Right ventricle myocardium inferior (tissue), 1 donor: ENCODE measurements at regions of chr6 and their contacts with region 1.

Region 1: DNA sequence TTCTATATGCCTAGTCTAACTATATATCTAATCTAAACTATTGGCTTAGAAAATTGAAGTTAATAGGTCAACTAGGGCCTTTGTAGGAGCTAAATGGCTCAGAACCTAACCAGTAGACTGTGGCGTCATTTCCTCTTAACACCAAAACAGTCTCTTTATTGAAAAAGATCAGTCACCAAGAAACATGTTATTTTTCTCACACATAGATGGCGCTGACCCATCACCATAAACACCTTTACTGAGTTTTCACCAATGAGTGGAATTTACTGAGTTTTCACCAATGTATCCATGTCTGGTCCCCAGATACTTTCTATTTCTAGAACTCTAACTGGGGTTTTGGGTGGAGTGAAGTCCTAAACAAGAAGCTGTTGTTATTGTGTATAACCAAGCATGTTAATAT is 636.0 kb downstream of the BCKDHB start:
- DNase-seq: no peak
- ATAC-seq: peak; percentile 34

Region 2: DNA sequence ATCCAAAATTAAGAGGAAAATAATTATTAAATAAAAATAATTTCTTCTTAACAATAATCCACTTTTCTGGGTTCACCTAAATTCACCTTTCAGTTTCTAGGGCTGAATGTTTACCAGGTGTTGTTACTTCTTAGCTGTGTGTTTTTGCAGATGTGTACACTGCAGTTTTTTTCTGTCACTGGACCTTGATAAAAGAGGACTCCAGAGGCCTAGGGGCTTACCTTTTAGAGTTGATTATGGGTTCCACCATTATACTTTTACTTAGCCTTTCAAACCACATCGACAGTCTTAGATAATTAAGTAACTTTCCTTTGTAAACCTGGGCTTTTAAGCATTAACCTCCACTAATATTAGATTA is 130.4 kb after region 1 on chr6:
- intact Hi-C with region 1: no loop called
- DNase-seq: no peak
- ATAC-seq: no peak

Region 3: DNA sequence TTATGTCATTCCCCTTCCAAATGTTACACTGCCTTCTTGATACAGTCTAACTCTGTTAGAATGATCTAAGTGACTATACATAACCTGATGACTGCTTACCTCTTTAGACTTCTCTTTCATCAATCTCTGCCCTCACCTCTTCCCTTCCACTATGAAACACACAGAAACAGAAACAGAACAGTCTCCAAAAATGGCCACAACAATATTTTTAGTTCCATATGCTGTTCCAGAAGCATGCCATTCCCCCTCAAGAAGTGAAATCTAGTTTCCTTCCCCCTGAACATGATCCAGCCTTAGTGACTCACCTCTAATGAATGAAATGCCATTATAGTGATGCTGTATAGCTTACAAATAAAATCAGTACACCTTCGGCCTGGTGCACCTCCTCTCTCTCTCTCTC is 1239.3 kb after region 1 on chr6:
- intact Hi-C with region 1: loop called (anchors 10 kb)
- DNase-seq: no peak
- ATAC-seq: no peak